ENCODE measurements at regions of chr11 and their contacts with region 1.

Region 1: GRCh38 chr11:27698872-27699474 is 1.3 kb downstream of the BDNF start:
- DNase-seq: peak; percentile 61
- ATAC-seq: peak; percentile 61
- H3K4me3 ChIP-seq: peak overlapping the region in 1 of 5 experiments; percentile 33
- H3K4me3 Mint-ChIP-seq: peak overlapping the region; percentile 69
- H3K27ac ChIP-seq: no peak overlapping the region
- H3K27ac Mint-ChIP-seq: no peak overlapping the region
- H3K4me1 ChIP-seq: peaks cover 30% of the 10 kb centered on the region in 2 donors
- H3K4me1 Mint-ChIP-seq: peaks cover 29% of the 10 kb centered on the region
- H3K27me3 ChIP-seq: peaks cover 1 to 58% (median 49%) of the 10 kb centered on the region in 4 experiments
- H3K27me3 Mint-ChIP-seq: peaks cover 67% of the 10 kb centered on the region
- CTCF ChIP-seq: peak; percentile 72

Region 2: DNA sequence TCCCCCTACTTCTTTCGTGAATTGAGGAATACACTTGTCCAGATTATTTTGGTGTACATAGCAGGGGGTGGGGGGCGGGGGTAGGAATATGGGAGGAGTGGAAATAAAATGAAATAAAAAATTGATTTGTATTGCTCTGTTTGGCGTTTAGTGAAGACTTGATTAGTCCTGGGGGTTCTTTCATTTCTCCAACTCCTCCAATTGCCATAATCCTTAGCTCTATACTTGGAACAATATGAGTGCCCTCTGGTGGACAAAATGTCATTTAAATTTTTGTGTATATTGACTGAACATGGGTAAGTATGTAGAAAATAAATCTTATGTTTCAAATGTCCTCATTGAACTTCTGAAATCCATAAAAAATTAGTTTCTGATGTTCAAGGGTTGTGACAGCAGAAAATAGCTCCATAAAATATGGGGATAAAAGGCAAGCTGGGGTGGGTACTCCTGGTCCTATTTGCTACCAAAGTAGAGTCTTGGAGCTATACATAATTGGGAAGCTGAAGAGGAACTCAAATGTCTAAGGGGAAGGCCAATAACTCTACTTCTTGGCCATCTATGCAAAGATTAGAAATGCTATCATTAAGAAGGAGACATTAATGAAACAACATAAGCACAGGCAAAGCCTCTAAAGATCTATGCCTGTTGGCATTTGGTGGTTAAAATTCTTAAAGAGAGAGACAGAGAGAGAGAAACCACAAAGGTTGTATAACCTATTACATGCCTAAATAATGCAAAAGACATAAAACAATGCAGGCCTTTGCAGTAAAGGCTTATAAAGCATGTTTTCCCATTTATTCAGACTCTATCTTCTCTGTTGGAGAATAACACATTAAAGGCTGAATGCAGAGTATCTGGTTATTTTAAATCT is 830.8 kb after region 1 on chr11:
- CTCF ChIA-PET with region 1: interaction called, 31 read pairs
- POLR2A ChIA-PET with region 1: no interaction called
- intact Hi-C with region 1: no loop called
- DNase-seq: peak; percentile 12
- ATAC-seq: no peak
- H3K4me3 ChIP-seq: no peak overlapping the region
- H3K4me3 Mint-ChIP-seq: no peak overlapping the region
- H3K27ac ChIP-seq: no peak overlapping the region
- H3K27ac Mint-ChIP-seq: no peak overlapping the region
- H3K4me1 ChIP-seq: no peaks in the 10 kb centered on the region
- H3K4me1 Mint-ChIP-seq: no peaks in the 10 kb centered on the region
- H3K27me3 ChIP-seq: no peaks in the 10 kb centered on the region
- H3K27me3 Mint-ChIP-seq: no peaks in the 10 kb centered on the region
- CTCF ChIP-seq: no peak

Region 3: DNA sequence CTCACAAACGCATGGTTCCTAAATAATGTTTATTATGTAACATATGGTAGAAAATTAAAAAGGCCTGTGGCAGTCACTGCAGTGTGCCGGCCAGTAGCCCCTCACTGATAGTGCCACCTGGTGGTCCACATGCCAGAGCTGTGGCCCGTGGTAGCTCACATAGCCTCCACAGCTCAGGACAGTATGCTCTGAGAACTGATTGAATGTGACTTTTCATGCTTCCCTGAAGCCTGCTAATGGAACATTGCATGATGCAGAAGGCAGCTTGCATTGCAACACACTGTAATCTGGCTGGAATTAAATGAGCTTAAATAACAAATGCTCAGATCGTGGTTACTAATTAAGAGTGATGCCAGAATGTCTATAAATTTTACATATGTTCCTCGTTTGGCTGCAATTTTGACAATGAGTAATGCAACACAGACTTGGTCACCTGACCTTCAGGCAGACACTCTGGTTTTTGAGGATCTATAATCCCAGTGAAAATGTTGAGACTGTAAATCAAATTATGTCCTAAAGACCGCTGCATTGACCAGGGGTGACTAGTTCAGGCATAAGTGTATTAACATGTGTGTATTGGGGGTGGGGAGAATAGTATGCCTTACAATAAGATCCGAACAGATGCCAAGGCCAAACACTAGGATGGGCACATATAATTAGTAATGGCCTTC is 975.6 kb after region 1 on chr11:
- CTCF ChIA-PET with region 1: interaction called, 4 read pairs
- POLR2A ChIA-PET with region 1: no interaction called
- intact Hi-C with region 1: loop called (anchors 5 kb)
- DNase-seq: no peak
- ATAC-seq: no peak
- H3K4me3 ChIP-seq: no peak overlapping the region
- H3K4me3 Mint-ChIP-seq: no peak overlapping the region
- H3K27ac ChIP-seq: no peak overlapping the region
- H3K27ac Mint-ChIP-seq: no peak overlapping the region
- H3K4me1 ChIP-seq: no peaks in the 10 kb centered on the region
- H3K4me1 Mint-ChIP-seq: no peaks in the 10 kb centered on the region
- H3K27me3 ChIP-seq: no peaks in the 10 kb centered on the region
- H3K27me3 Mint-ChIP-seq: no peaks in the 10 kb centered on the region
- CTCF ChIP-seq: no peak